ENCODE measurements at regions of chr9 and their contacts with region 1.

Region 1: GRCh38 chr9:86687788-86688187 is 259.5 kb downstream of the GAS1 start:
- DNase-seq: no peak
- H3K4me3 ChIP-seq: no peak overlapping the region
- H3K27ac ChIP-seq: no peak overlapping the region
- H3K4me1 ChIP-seq: no peaks in the 10 kb centered on the region
- H3K27me3 ChIP-seq: no peaks in the 10 kb centered on the region
- CTCF ChIP-seq: no peak

Region 2: DNA sequence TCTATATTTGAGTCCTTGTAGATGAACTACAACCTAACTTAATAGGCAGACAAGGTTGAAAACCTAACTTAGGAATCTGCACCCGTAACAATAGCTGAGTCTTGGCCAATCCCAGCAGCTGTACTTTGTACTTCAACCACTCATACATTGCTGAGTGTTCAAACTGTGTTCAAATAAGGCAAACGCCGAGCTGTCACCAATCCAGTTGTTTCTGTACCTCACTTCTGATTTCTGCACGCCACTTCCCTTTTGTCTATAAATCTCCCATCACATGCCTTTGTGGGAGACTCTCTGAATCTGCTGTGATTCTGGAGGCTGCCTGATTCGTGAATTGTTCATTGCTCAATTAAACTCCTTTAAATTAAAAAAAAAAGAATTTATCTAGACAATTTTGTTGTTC is 165.8 kb before region 1 on chr9:
- intact Hi-C with region 1: loop called (anchors 5 kb)
- DNase-seq: no peak
- H3K4me3 ChIP-seq: no peak overlapping the region
- H3K27ac ChIP-seq: no peak overlapping the region
- H3K4me1 ChIP-seq: no peaks in the 10 kb centered on the region
- H3K27me3 ChIP-seq: peaks cover 12% of the 10 kb centered on the region
- CTCF ChIP-seq: no peak